ENCODE measurements at regions of chrX and their contacts with region 1.

Region 1: GRCh38 chrX:103175944-103176753 is 38.8 kb upstream of the BEX4 start:
- DNase-seq: peak; percentile 68
- ATAC-seq: peak; percentile 58

Region 2: DNA sequence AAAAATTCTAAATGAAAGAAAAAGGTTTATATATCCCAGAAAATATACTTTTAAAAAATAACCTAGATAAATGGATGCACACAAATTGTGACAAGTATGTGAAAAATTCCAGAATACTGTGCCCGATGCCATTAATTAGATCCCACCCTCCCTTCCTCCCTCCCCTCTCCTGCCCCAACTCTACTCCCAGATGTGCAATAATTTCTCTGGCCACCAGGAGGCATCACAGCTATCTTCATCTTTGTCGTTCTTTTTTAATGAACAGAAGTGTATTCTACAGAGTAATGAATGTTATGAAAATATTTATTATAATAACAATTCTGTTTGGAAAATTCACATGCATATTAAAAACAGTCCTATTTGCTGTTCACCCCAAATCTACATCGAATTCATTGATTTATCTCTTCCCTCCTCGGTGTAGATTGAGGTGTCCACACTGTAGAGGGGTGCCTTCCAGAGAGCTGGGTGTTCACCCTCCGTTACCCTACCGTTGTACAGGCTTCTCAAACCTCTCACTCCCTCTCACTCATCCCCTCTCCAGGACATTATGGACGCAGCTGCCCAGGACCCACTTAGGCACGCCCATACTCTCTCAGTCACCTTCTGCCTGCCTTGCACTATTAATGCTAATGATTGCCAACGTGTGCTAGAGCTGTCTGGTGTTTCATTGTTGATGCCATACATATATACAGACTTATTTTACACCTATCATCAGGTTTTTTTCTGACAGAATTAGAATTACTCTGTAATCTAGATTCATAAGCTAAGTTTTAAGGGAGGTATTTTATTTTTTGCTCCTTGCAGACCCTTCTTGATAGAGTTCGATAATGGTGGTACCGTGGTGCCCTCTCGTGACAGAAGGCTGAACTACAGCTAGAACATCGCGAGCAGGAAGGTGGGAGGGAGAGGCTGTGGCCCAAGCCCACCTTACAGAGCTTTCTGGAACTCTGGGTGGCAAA is 225.0 kb before region 1 on chrX:
- intact Hi-C with region 1: loop called (anchors 5 kb)
- DNase-seq: peak; percentile 42
- ATAC-seq: peak; percentile 56